H1 (cell line): ENCODE measurements at regions of chr4 and their contacts with region 1.

Region 1: DNA sequence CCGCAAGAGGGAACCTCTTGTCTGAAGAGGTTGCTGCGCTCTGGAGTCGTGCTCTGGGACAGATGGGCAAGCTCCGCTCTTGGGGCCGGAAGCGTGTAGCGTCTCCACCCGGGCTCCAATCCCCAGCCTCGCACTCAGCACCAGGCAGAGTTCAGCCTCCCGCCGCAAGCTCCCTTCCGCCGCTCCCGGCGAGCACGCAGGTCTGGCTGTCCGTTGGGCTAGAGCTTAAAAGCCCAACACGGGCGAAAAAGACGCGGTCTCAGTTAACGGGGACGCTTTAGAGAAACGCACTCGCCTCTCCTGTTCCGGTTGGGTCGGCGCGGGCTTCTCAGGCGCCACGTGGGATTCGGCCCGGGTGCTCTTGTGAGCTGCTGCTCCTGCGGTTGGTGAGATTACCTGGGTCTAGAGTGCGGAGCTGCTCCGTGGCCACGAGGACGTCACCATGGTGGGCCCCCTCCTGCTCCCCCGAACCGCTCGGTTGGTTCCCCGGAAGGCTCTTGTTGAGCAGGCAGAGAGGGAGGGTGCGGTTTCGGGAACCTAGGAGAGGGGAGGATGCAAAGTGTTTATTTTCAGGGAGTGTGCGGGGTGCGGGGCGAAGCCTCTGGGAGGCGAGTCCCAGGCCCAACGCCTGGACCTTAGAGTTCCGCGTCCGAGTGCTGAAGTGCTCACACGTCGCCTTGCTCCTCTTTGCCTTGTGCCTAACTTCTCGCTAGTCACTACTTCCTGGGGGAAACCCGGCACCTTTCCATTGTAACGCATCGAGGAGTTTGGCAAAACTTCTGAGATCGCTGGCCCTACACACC is at the start of gene TMA16:
- DNase-seq: peak; percentile 77 to 87
- H3K4me3 ChIP-seq: peak within 1 kb of the TSS; percentile 86 to 97 (median 89)
- H3K27ac ChIP-seq: peak within 1 kb of the TSS; percentile 93
- H3K4me1 ChIP-seq: 0 out of 7 replicates have a peak, but pooled peaks cover 0 to 3% (median 0%) of the 10 kb centered on the region in 4 experiments
- H3K27me3 ChIP-seq: no peaks in the 10 kb centered on the region
- CTCF ChIP-seq: no peak
- EP300 ChIP-seq: no peak; a peak in 1 of 3 replicates
- POLR2A ChIP-seq: peak; percentile 83 to 99
- RAD21 ChIP-seq: 0 out of 4 replicates have a peak, but pooled peaks of 1 of the 2 experiments have one; percentile 9
- total RNA-seq, gene TMA16: 64.2 and 67.3 TPM in 2 replicates

Region 2: DNA sequence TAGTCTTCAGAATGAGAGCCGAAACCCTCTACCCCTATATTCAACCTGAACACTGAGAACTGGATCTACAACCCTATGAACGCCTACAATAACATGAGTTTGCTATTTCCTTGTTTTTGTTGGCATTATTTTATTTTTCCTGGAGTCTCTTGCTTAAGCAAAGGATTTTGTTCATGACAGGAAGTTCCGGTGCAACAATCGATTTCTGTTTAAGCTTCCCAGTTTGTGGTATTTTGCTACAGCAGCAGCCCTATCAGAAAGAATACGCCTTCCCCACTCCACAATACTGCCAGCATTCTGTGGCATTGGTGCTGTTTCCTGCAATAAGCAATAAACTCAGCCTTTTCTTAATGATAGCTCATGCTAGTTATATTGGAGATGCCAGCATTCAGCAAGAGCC is 90.0 kb before region 1 on chr4:
- CTCF ChIA-PET with region 1: no interaction called
- POLR2A ChIA-PET with region 1: no interaction called
- DNase-seq: no peak
- H3K4me3 ChIP-seq: no peak overlapping the region
- H3K27ac ChIP-seq: no peak overlapping the region
- H3K4me1 ChIP-seq: peaks cover 0 to 4% (median 2%) of the 10 kb centered on the region in 4 experiments; a peak in 3 of 7 replicates
- H3K27me3 ChIP-seq: no peaks in the 10 kb centered on the region
- CTCF ChIP-seq: no peak
- EP300 ChIP-seq: no peak
- POLR2A ChIP-seq: no peak
- RAD21 ChIP-seq: no peak

Region 3: DNA sequence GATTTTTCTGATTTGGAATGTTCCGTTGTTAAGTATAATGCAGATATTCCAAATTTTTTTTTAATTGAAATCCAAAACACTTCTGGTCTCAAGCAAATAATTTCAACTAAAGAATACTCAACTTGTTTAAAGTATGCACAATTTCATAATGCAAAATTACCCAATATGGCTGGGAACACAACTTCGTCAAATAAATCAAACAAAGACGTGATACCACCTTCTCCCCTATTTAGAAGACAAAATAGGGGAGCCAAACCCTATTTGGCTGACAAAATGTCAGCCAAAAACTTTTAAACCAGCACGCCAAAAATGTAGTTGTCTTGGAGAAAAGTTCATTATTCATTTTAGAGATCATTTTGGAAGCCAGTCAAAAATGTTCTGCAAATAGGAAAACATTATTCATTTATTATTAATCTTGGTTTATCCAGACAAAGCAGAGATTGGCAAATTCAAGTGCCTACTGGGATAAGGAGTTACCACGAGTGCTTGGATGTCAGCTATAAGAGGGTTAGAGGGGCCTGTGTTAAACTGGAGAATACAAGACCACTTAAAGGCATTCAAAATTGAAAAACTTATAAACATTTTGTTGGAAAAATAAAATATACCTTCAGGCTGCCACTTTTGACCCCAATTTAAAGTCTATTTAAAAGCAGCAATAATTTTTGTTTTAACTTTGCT is 17.7 kb before region 1 on chr4:
- CTCF ChIA-PET with region 1: no interaction called
- POLR2A ChIA-PET with region 1: interaction called, 10 read pairs
- DNase-seq: no peak
- H3K4me3 ChIP-seq: no peak overlapping the region
- H3K27ac ChIP-seq: no peak overlapping the region
- H3K4me1 ChIP-seq: no peaks in the 10 kb centered on the region
- H3K27me3 ChIP-seq: no peaks in the 10 kb centered on the region
- CTCF ChIP-seq: no peak
- EP300 ChIP-seq: no peak
- POLR2A ChIP-seq: no peak
- RAD21 ChIP-seq: no peak

Region 4: GRCh38 chr4:163505374-163505773 is 10.8 kb after region 1 on chr4:
- CTCF ChIA-PET with region 1: interaction called, 12 read pairs
- POLR2A ChIA-PET with region 1: interaction called, 38 read pairs
- DNase-seq: no peak
- H3K4me3 ChIP-seq: no peak overlapping the region
- H3K27ac ChIP-seq: no peak overlapping the region
- H3K4me1 ChIP-seq: peaks cover 0 to 5% (median 0%) of the 10 kb centered on the region in 4 experiments; a peak in 1 of 7 replicates
- H3K27me3 ChIP-seq: no peaks in the 10 kb centered on the region
- CTCF ChIP-seq: no peak
- EP300 ChIP-seq: no peak
- POLR2A ChIP-seq: no peak
- RAD21 ChIP-seq: no peak